ENCODE measurements at regions of chr17 and their contacts with region 1.

Region 1: DNA sequence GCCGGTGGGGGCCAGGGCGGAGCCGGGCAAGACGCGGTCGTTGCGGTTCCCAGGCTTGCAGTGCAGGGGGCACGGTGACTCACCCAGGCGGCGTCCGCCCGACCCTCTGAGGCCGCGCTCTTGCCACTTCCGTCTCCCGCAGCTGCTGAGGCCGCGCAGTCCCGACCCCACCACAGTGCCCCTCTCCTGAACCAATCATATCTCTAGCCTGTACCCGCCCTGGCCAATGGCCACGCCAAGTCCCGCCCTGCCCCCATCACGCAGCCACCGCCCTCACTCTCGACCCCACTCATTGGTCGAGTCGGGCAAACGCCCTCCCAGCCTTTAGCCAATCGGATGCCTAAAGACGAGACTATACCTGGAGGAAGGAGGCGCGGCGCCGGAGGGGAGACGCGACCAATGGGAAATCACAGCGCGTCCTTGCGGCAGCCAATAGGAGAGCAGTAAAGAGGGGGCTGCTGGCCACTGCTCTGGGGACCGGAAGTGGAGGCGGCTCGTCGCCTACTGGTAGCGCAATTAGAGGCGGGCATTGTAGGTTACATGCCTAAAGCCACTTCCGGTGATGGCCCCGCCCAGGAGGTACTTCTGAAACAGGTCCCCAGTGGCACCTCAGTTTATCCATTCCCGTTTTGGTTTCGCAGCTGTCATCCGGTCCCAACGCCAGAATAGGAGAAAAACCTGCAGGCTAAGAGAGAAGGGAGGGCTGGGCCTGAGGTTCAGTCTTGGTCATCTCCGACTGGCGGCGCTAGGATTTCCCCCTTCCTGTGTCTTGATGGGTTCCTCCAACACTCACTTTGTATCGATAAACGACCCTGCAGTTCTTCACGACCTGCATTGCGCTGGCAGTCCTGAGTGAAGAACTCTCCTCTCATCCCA is 3.5 kb upstream of the MTMR4 start:
- DNase-seq: peak; percentile 100
- ATAC-seq: peak; percentile 83
- H3K4me3 Mint-ChIP-seq: peak overlapping the region; percentile 91
- H3K27ac Mint-ChIP-seq: peak overlapping the region; percentile 98
- H3K4me1 Mint-ChIP-seq: peaks cover 33% of the 10 kb centered on the region
- H3K27me3 Mint-ChIP-seq: no peaks in the 10 kb centered on the region
- CTCF ChIP-seq: no peak

Region 2: DNA sequence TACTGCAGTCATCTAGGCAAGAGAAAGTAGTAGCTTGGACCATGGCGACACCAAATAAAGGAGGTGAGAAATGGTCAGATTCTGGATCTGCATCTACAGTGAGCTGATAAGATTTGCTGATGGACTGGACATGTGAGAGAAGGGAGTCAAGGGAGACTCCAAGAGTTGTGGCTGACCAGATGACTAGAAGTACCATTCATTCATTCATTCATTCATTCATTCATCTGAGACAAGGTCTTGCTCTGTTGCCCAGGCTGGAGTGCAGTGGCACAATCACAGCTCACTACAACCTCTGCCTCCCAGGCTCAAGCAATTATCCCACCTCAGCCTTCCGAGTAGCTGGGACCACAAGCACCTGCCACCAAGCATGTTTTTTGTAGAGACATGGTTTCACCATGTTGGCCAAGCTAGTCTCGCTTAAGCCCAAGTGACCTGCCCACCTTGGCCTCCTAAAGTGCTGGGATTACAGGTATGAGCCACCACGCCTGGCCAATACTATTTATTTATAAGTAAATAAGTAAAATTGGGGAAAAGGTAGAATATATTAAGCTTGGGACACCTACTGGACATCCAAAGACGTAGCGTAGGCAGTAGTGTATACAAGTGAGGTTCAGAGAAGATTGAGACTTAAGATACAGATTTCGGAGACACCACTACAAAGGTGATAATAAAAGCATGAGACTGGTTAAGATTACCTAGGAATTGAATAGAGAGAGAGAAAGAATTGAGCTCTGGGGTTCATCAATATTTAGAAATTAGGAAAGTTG is 85.0 kb before region 1 on chr17:
- CTCF ChIA-PET with region 1: no interaction called
- POLR2A ChIA-PET with region 1: no interaction called
- intact Hi-C with region 1: no loop called
- DNase-seq: no peak
- ATAC-seq: no peak
- H3K4me3 Mint-ChIP-seq: no peak overlapping the region
- H3K27ac Mint-ChIP-seq: no peak overlapping the region
- H3K4me1 Mint-ChIP-seq: no peaks in the 10 kb centered on the region
- H3K27me3 Mint-ChIP-seq: no peaks in the 10 kb centered on the region
- CTCF ChIP-seq: no peak

Region 3: GRCh38 chr17:58476812-58477211 is 41.2 kb before region 1 on chr17:
- CTCF ChIA-PET with region 1: no interaction called
- POLR2A ChIA-PET with region 1: no interaction called
- intact Hi-C with region 1: no loop called
- DNase-seq: no peak
- ATAC-seq: no peak
- H3K4me3 Mint-ChIP-seq: no peak overlapping the region
- H3K27ac Mint-ChIP-seq: no peak overlapping the region
- H3K4me1 Mint-ChIP-seq: peaks cover 7% of the 10 kb centered on the region
- H3K27me3 Mint-ChIP-seq: no peaks in the 10 kb centered on the region
- CTCF ChIP-seq: no peak

Region 4: GRCh38 chr17:58498170-58498828 is 19.7 kb before region 1 on chr17:
- CTCF ChIA-PET with region 1: interaction called, 6 read pairs
- POLR2A ChIA-PET with region 1: interaction called, 14 read pairs
- intact Hi-C with region 1: no loop called
- DNase-seq: no peak
- ATAC-seq: no peak
- H3K4me3 Mint-ChIP-seq: no peak overlapping the region
- H3K27ac Mint-ChIP-seq: no peak overlapping the region
- H3K4me1 Mint-ChIP-seq: peaks cover 7% of the 10 kb centered on the region
- H3K27me3 Mint-ChIP-seq: no peaks in the 10 kb centered on the region
- CTCF ChIP-seq: no peak

Region 5: DNA sequence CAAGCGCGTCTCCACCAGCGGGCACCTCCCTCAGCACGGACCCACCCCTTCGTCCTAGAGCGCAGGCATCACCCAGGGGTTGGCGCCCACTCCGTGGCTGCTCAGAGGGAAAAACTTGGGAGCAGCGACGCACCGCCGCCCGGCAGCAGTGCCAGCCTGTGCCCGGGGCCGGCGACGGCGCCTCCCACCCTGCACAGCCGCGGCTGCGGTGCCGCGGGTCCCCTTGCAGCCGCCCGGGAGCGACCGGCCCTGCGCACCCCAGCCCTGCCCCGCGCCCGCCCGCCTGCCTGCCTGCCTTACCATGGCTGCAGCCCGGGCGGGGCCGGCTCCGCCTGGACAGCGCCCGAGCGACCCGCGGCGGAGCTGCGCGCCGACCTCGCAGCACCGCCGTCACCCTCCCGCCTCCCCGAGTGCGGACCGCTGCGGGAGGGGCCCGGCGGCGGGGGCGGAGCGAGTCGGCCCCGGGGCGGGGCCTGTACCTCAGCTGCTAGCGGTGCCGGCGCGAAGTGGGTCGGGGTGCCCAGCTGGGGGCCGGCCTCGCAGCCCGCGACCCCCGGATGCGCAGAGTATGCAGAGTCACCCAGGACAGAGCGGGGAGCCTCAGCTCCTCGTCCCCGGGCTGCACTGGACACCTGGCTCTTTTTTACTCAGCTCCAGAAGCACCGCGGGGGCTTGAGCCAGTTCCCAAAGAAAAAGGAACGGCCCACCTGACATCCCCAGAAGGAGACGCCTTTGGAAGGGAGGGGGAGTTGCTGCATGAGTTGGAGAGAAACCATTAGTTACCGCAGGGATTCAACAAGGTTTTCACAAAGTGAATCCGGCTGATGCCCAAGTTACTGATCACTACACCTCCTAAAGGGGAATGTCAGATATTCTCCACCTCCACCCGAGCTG is 13.9 kb after region 1 on chr17:
- CTCF ChIA-PET with region 1: interaction called, 11 read pairs
- POLR2A ChIA-PET with region 1: interaction called, 20 read pairs
- intact Hi-C with region 1: no loop called
- DNase-seq: peak; percentile 50
- ATAC-seq: peak; percentile 89
- H3K4me3 Mint-ChIP-seq: peak overlapping the region; percentile 53
- H3K27ac Mint-ChIP-seq: no peak overlapping the region
- H3K4me1 Mint-ChIP-seq: no peaks in the 10 kb centered on the region
- H3K27me3 Mint-ChIP-seq: peaks cover 39% of the 10 kb centered on the region
- CTCF ChIP-seq: no peak

Region 6: GRCh38 chr17:58617563-58617962 is 99.6 kb after region 1 on chr17:
- CTCF ChIA-PET with region 1: no interaction called
- POLR2A ChIA-PET with region 1: no interaction called
- intact Hi-C with region 1: no loop called
- DNase-seq: no peak
- ATAC-seq: no peak
- H3K4me3 Mint-ChIP-seq: no peak overlapping the region
- H3K27ac Mint-ChIP-seq: no peak overlapping the region
- H3K4me1 Mint-ChIP-seq: peaks cover 9% of the 10 kb centered on the region
- H3K27me3 Mint-ChIP-seq: no peaks in the 10 kb centered on the region
- CTCF ChIP-seq: no peak

Region 7: DNA sequence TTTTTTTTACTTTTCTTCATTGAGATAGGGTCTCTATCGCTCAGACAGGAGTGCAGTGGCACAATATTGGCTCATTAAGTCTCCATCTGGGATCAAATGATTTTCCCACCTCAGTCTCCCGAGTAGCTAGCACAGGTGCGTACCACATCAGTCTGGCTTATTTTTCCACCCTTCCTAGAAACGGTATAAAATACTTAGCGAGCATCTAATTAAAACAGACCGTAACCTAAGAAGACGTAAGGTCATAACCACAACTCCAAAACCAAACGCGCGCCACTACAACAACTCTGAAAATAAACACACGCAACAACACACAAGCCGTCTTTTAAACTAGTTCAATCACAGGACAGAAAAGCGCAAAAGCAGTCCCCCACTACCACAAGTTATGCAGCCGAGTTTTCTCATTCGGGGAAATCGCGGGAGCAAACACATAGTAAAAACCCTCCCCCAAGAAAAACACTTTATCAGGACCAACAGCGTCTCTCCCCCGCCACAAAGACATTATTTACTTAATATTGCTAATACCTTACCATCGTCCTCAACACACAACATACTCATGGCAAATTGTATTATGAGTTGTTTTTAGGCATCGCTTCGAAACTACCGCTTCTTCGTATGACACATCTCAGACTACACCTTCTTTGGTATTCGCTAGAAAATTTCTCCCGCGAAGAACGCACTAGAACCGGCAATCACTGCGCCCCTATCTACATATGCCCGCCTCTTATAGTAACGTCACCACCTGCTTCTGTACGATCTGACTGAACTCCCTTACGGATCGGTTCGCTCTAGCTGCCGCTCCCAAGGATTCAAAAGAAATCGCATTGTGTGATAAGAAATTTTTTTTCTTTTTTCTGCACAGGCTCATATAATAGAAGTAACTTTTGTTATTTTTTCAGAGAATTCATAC is 141.1 kb after region 1 on chr17:
- CTCF ChIA-PET with region 1: interaction called, 3 read pairs
- POLR2A ChIA-PET with region 1: interaction called, 12 read pairs
- intact Hi-C with region 1: no loop called
- DNase-seq: peak; percentile 93
- ATAC-seq: peak; percentile 91
- H3K4me3 Mint-ChIP-seq: peak overlapping the region; percentile 72
- H3K27ac Mint-ChIP-seq: peak overlapping the region; percentile 99
- H3K4me1 Mint-ChIP-seq: peaks cover 18% of the 10 kb centered on the region
- H3K27me3 Mint-ChIP-seq: peaks cover 9% of the 10 kb centered on the region
- CTCF ChIP-seq: no peak

Region 8: GRCh38 chr17:59004338-59005111 is 486.6 kb after region 1 on chr17:
- CTCF ChIA-PET with region 1: interaction called, 35 read pairs
- POLR2A ChIA-PET with region 1: no interaction called
- intact Hi-C with region 1: loop called (anchors 10 kb)
- DNase-seq: peak; percentile 85
- ATAC-seq: peak; percentile 63
- H3K4me3 Mint-ChIP-seq: no peak overlapping the region
- H3K27ac Mint-ChIP-seq: peak overlapping the region; percentile 72
- H3K4me1 Mint-ChIP-seq: peaks cover 34% of the 10 kb centered on the region
- H3K27me3 Mint-ChIP-seq: no peaks in the 10 kb centered on the region
- CTCF ChIP-seq: peak; percentile 94

Measured in activated CD8-positive, alpha-beta T cell treated with anti-CD3 and anti-CD28 coated beads for 36 hours (primary cell).